Panc1 (cell line): ENCODE measurements at regions of chr1 and their contacts with region 1.

Region 1: GRCh38 chr1:6704746-6705145 is 3.1 kb upstream of the DNAJC11 start:
- DNase-seq: no peak
- ATAC-seq: no peak
- H3K4me3 ChIP-seq: no peak overlapping the region
- H3K27ac ChIP-seq: no peak overlapping the region
- H3K4me1 ChIP-seq: peaks cover 11% of the 10 kb centered on the region
- H3K27me3 ChIP-seq: peaks cover 2% of the 10 kb centered on the region; the same call in 1 of the 2 replicates
- CTCF ChIP-seq: no peak

Region 2: GRCh38 chr1:6634371-6635052 is 70.2 kb before region 1 on chr1:
- CTCF ChIA-PET with region 1: no interaction called
- POLR2A ChIA-PET with region 1: no interaction called
- in situ Hi-C with region 1: no loop called
- intact Hi-C with region 1: no loop called
- DNase-seq: no peak
- ATAC-seq: peak; percentile 80
- H3K4me3 ChIP-seq: no peak overlapping the region
- H3K27ac ChIP-seq: no peak overlapping the region
- H3K4me1 ChIP-seq: no peaks in the 10 kb centered on the region
- H3K27me3 ChIP-seq: no peaks in the 10 kb centered on the region
- CTCF ChIP-seq: peak; percentile 50; the same call in 1 of the 2 replicates

Region 3: DNA sequence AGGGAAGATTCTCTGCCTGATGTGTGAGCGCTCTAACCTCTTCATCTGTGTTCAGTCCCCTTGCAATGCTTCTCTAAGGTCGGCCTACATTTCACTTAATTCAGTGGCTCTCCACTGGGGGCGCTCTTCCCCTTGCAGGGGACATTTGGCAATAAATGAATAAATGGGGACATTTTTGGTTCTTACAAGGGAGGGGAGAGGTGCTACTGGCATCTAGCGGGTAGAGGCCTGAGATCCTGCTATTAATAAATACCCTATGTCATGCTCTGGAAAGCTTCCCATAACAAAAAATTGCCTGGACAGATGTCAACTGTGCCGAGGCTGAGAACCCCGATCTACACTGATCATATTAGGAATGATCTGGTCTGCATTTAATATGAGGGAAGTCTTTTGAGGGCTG is 22.8 kb after region 1 on chr1:
- CTCF ChIA-PET with region 1: no interaction called
- POLR2A ChIA-PET with region 1: no interaction called
- in situ Hi-C with region 1: no loop called
- intact Hi-C with region 1: no loop called
- DNase-seq: peak; percentile 52
- ATAC-seq: peak; percentile 75
- H3K4me3 ChIP-seq: no peak overlapping the region
- H3K27ac ChIP-seq: no peak overlapping the region
- H3K4me1 ChIP-seq: peaks cover 5% of the 10 kb centered on the region; the same call in 1 of the 2 replicates
- H3K27me3 ChIP-seq: no peaks in the 10 kb centered on the region
- CTCF ChIP-seq: peak; percentile 98

Region 4: GRCh38 chr1:6770751-6771440 is 66.2 kb after region 1 on chr1:
- CTCF ChIA-PET with region 1: no interaction called
- POLR2A ChIA-PET with region 1: interaction called, 10 read pairs
- in situ Hi-C with region 1: no loop called
- intact Hi-C with region 1: no loop called
- DNase-seq: no peak
- ATAC-seq: peak; percentile 76; the same call in 1 of the 2 replicates
- H3K4me3 ChIP-seq: no peak overlapping the region
- H3K27ac ChIP-seq: no peak overlapping the region
- H3K4me1 ChIP-seq: no peaks in the 10 kb centered on the region
- H3K27me3 ChIP-seq: no peaks in the 10 kb centered on the region
- CTCF ChIP-seq: no peak

Region 5: DNA sequence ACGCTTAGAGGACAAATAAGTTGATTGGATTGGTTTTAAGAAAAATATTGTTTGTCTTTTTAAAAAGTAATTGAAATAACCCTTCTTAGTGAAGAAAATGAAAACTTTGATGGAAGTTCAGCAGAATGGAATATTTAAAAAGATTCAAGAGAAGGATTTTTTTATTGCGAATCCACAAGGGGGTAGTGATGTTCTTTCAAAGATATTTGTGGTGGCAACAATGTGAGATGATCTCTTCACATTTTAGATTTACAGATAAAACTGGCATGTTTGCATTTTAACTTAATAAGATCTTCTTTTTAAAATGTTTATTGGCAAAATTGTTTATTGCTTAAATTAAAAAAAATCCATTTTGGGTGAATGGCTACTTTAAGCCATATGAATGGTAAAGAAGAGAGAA is 89.4 kb after region 1 on chr1:
- CTCF ChIA-PET with region 1: no interaction called
- POLR2A ChIA-PET with region 1: no interaction called
- in situ Hi-C with region 1: no loop called
- intact Hi-C with region 1: no loop called
- DNase-seq: no peak
- ATAC-seq: no peak
- H3K4me3 ChIP-seq: no peak overlapping the region
- H3K27ac ChIP-seq: no peak overlapping the region
- H3K4me1 ChIP-seq: 0 out of 2 replicates have a peak, but pooled peaks cover 3% of the 10 kb centered on the region
- H3K27me3 ChIP-seq: no peaks in the 10 kb centered on the region
- CTCF ChIP-seq: no peak; the same call in 1 of the 2 replicates

Region 6: DNA sequence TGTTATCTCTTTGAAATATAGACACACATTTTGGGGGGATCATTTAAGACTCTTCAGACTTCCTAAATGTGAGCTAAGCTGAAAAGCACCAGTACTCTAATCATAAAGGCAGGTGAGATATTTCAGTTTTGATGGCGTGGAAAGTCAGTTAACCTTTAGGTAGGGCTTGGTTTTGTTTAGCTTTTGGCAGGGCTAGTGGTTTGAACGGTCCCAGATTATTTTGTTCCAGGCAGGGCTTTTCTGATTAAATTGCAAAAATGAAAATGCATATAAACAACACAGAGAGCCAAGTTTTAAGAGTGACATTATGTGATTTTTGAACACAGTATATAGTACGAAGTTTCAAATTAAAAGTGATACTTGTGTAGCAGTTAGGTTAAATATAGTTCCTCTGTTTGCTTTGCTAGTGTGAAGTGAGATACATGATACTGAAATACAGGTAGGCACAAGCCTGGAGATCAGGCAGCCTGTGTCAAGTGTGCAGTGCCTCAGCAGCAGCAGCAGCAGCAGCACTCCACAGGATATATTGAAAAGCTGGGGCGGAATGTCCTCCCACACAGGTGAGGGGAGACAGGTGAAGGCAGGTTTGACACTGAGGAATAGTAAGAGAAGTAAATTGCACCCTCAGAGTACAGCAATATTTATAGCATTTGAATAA is 127.9 kb after region 1 on chr1:
- CTCF ChIA-PET with region 1: no interaction called
- POLR2A ChIA-PET with region 1: no interaction called
- in situ Hi-C with region 1: no loop called
- intact Hi-C with region 1: no loop called
- DNase-seq: no peak
- ATAC-seq: no peak
- H3K4me3 ChIP-seq: no peak overlapping the region
- H3K27ac ChIP-seq: no peak overlapping the region
- H3K4me1 ChIP-seq: no peaks in the 10 kb centered on the region
- H3K27me3 ChIP-seq: no peaks in the 10 kb centered on the region
- CTCF ChIP-seq: no peak

Region 7: DNA sequence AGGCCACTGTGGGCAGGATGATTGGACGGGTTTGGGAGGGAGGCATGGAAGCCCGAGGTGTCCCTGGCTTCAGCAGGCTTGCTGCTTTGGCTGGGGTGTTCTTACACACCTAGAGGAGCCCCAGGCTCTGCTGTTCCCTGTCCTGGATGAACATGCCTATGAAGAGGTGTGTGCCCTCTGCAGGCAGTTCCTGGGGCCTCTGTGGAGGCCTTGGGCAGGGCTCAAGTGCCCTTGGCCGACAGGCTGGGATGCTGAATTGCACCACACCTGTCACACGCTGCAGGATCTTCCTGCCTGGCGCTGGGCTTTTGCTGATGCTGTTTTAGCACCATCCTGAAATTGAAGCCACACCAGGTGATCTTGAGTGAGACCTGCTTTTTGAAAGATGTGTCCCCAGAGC is 651.3 kb after region 1 on chr1:
- CTCF ChIA-PET with region 1: no interaction called
- POLR2A ChIA-PET with region 1: no interaction called
- in situ Hi-C with region 1: no loop called
- intact Hi-C with region 1: loop called (anchors 5 kb)
- DNase-seq: no peak
- ATAC-seq: no peak
- H3K4me3 ChIP-seq: no peak overlapping the region
- H3K27ac ChIP-seq: no peak overlapping the region
- H3K4me1 ChIP-seq: no peaks in the 10 kb centered on the region
- H3K27me3 ChIP-seq: no peaks in the 10 kb centered on the region
- CTCF ChIP-seq: no peak